ENCODE measurements at regions of chr3 and their contacts with region 1.

Region 1: GRCh38 chr3:179811321-179812095 is 158.7 kb downstream of the USP13 start:
- DNase-seq: peak; percentile 65
- H3K4me3 ChIP-seq: peak overlapping the region; percentile 36; the same call in 1 of the 2 replicates
- H3K27ac ChIP-seq: peak overlapping the region; percentile 82
- H3K27me3 ChIP-seq: no peaks in the 10 kb centered on the region
- CTCF ChIP-seq: peak; percentile 74

Region 2: DNA sequence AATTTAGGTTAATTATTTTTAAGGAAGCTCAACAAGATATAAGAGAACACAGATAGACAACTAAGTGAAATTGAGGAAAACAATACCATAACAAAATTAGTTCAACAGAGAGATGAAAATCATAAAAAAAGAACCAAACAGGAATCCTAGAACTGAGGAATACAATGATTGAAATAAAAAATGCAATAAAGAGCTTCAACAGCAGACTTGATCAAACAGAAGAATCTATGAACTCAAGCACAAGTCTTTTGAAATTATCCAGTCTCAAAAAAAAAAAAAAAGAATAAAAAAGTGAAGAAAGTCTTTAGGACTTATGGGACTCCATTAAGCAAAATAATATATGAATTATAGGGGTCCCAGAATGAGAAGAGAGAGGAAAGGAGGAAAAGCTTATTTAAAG is 318.2 kb before region 1 on chr3:
- CTCF ChIA-PET with region 1: no interaction called
- POLR2A ChIA-PET with region 1: no interaction called
- DNase-seq: no peak
- H3K4me3 ChIP-seq: no peak overlapping the region
- H3K27ac ChIP-seq: no peak overlapping the region
- H3K27me3 ChIP-seq: no peaks in the 10 kb centered on the region
- CTCF ChIP-seq: no peak

Region 3: DNA sequence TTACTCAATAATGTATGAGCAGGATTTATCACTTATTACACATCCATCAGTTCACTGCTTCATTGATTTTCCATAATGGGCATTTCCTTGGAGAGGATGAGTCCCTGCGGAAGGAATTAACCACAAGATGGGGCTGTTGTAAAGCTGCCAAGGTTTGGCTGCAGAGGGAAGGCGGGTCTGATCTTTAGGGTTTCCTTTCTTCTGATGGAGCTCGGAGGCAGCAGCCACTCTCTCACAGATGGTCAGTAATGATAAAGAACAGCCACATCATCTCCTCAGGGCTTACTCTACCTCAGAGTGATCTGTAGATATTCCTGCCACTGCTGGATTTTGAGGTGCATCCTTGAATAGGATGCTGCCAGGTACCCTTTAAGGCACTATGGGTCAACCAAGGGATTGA is 43.4 kb before region 1 on chr3:
- CTCF ChIA-PET with region 1: interaction called, 21 read pairs
- POLR2A ChIA-PET with region 1: no interaction called
- DNase-seq: peak; percentile 32
- H3K4me3 ChIP-seq: no peak overlapping the region
- H3K27ac ChIP-seq: no peak overlapping the region
- H3K27me3 ChIP-seq: no peaks in the 10 kb centered on the region
- CTCF ChIP-seq: peak; percentile 79

Region 4: GRCh38 chr3:179801263-179801662 is 10.2 kb before region 1 on chr3:
- CTCF ChIA-PET with region 1: interaction called, 25 read pairs
- POLR2A ChIA-PET with region 1: no interaction called
- DNase-seq: peak; percentile 85
- H3K4me3 ChIP-seq: no peak overlapping the region
- H3K27ac ChIP-seq: no peak overlapping the region
- H3K27me3 ChIP-seq: no peaks in the 10 kb centered on the region
- CTCF ChIP-seq: no peak

Region 5: GRCh38 chr3:179852142-179852905 is 40.8 kb after region 1 on chr3:
- CTCF ChIA-PET with region 1: interaction called, 27 read pairs
- POLR2A ChIA-PET with region 1: interaction called, 10 read pairs
- DNase-seq: peak; percentile 59
- H3K4me3 ChIP-seq: no peak overlapping the region
- H3K27ac ChIP-seq: no peak overlapping the region
- H3K27me3 ChIP-seq: no peaks in the 10 kb centered on the region
- CTCF ChIP-seq: peak; percentile 51

Region 6: GRCh38 chr3:180433152-180433551 is 621.6 kb after region 1 on chr3:
- CTCF ChIA-PET with region 1: no interaction called
- POLR2A ChIA-PET with region 1: no interaction called
- DNase-seq: peak; percentile 37
- H3K4me3 ChIP-seq: no peak overlapping the region
- H3K27ac ChIP-seq: no peak overlapping the region
- H3K27me3 ChIP-seq: no peaks in the 10 kb centered on the region
- CTCF ChIP-seq: no peak

Region 7: DNA sequence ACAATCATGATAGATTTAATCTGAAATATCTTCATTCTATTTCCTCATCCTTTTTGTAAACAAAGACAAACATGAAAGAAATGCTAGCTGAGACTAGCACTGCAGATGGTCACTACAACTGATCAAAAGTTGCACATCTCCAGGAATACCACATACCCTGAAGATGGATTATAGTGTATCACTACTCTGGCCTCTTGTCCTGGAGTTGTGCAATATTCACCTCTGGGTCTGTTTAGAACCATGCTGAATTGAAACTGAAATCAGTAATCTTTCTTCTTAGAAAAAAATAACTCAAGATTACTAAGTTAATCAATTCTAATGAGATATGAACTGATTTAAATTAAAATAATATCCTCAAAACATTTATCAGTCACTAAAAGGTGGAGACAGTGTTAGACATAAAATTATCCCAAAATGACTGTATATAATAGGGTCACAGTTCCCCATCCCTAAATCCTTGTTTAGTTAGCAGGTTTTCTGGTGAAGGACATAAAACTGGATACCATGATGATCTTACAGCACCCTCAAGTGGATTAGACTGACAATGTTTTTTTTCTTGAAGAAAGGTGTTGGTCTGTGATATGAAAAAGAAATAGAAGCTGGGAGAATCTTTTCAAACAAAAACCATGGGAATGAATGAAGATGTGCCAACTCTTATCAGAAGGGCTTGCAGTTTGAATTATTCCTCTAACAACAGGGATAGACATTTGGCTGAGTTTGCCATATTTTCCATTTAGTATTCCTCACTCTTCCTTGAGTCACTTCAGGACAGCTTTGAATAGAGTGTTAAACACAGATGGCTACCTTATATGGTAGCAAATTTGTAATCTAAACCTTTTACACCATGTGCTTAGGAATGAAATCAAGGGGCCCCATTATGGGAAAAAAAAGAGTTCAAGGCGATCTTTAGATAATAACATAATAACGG is 783.4 kb after region 1 on chr3:
- CTCF ChIA-PET with region 1: interaction called, 24 read pairs
- POLR2A ChIA-PET with region 1: no interaction called
- DNase-seq: peak; percentile 37
- H3K4me3 ChIP-seq: no peak overlapping the region
- H3K27ac ChIP-seq: no peak overlapping the region
- H3K27me3 ChIP-seq: no peaks in the 10 kb centered on the region
- CTCF ChIP-seq: peak; percentile 68